ENCODE measurements at regions of chr15 and their contacts with region 1.

Region 1: GRCh38 chr15:50003786-50004334 is 115.2 kb downstream of the ATP8B4 start:
- DNase-seq: peak; percentile 63 to 71
- H3K4me3 ChIP-seq: no peak overlapping the region
- H3K27ac ChIP-seq: no peak overlapping the region
- H3K4me1 ChIP-seq: no peaks in the 10 kb centered on the region
- H3K27me3 ChIP-seq: no peaks in the 10 kb centered on the region
- CTCF ChIP-seq: peak; percentile 76

Region 2: DNA sequence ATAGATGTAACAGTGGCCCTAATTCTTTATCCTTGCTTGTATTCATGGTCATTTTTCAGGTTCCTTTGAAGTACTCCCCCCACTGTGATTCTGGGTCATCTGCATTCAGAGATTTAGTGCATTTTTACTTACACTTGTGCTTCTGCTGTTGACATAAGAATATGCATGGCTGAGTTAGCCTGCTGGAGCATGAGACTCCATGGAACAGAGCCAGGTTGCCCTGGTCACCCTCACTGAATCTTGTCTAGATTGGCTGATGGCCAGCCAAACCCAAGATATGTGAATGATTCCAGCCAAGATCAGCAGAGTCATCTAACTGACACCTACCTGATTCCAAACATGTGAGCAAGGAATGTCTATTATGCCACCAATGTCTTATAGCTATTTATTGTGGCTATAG is 358.0 kb before region 1 on chr15:
- CTCF ChIA-PET with region 1: no interaction called
- POLR2A ChIA-PET with region 1: no interaction called
- intact Hi-C with region 1: no loop called
- DNase-seq: peak in 1 of 2 experiments; percentile 33
- H3K4me3 ChIP-seq: no peak overlapping the region
- H3K27ac ChIP-seq: no peak overlapping the region
- H3K4me1 ChIP-seq: no peaks in the 10 kb centered on the region
- H3K27me3 ChIP-seq: no peaks in the 10 kb centered on the region
- CTCF ChIP-seq: no peak

Region 3: GRCh38 chr15:49962044-49962602 is 41.7 kb before region 1 on chr15:
- CTCF ChIA-PET with region 1: interaction called, 15 read pairs
- POLR2A ChIA-PET with region 1: no interaction called
- intact Hi-C with region 1: no loop called
- DNase-seq: no peak
- H3K4me3 ChIP-seq: no peak overlapping the region
- H3K27ac ChIP-seq: no peak overlapping the region
- H3K4me1 ChIP-seq: no peaks in the 10 kb centered on the region
- H3K27me3 ChIP-seq: no peaks in the 10 kb centered on the region
- CTCF ChIP-seq: no peak

Measured in PC-9 (cell line).